ENCODE measurements at regions of chr9 and their contacts with region 1.

Region 1: DNA sequence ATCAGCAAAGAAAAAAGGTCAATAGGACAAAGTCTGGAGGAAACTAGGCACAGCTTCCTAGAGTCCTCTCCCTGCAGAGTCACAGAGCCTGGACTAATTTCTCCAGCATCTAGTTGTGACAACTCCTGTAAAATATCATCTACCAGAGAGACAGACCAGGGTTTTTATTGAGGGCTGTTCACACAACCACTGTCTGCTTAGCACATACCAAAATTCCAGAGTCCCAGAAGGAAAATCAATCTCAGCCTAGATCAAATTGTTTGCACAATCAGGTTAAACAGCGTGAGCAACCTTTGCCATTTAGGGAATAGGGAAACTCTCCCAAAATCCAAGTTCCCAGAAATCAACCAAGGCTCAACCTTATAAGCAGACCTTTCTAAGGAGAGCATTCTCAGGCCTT is 190.3 kb downstream of the SYK start:
- DNase-seq: peak; percentile 25
- H3K4me3 ChIP-seq: no peak overlapping the region
- H3K27ac ChIP-seq: peak overlapping the region; percentile 72
- H3K4me1 ChIP-seq: peaks cover 34% of the 10 kb centered on the region
- H3K27me3 ChIP-seq: no peaks in the 10 kb centered on the region
- CTCF ChIP-seq: no peak

Region 2: GRCh38 chr9:90942555-90942954 is 49.4 kb before region 1 on chr9:
- CTCF ChIA-PET with region 1: interaction called, 3 read pairs
- dilution Hi-C with region 1: no loop called
- in situ Hi-C with region 1: no loop called
- intact Hi-C with region 1: loop called (anchors 2 kb)
- DNase-seq: peak; percentile 100
- H3K4me3 ChIP-seq: no peak overlapping the region
- H3K27ac ChIP-seq: peak overlapping the region; percentile 87
- H3K4me1 ChIP-seq: peaks cover 26% of the 10 kb centered on the region
- H3K27me3 ChIP-seq: no peaks in the 10 kb centered on the region
- CTCF ChIP-seq: no peak